ENCODE measurements at regions of chr7 and their contacts with region 1.

Region 1: DNA sequence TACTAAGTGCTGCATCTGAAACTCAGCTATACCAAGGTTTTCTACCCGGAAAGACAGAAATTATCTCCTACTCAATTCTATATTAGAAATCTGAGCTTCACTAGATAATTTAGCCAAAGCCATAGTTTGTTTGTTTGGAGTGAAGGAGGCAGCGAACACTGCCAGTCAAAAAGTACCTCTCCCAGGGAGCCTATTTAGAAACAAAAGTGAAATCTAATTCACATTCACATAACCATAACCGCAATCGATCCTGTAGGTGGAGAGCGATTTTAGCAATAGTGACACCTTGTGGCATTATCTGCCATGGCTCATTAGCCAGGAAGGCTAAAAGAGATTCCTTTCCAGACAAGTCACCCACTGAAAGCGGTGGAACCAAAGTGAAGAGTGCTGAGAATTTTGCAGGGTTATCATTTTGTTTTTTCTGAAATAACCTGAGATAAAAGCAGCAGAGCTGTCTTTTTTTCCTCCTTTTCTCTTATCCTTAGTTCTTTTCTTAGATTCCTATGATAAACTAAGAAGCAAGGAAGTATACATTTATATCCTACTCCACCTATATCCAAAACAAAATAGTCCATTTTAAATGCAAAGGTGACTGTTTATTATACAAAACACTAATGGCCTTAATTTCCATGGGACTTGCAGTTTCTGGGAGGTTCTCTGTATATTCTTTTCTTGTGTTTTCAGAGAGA is 83.7 kb upstream of the BET1 start:
- ATAC-seq: peak; percentile 48 to 97 (median 78)
- H3K4me3 ChIP-seq: no peak overlapping the region
- H3K27ac ChIP-seq: no peak overlapping the region
- H3K4me1 ChIP-seq: no peaks in the 10 kb centered on the region

Region 2: DNA sequence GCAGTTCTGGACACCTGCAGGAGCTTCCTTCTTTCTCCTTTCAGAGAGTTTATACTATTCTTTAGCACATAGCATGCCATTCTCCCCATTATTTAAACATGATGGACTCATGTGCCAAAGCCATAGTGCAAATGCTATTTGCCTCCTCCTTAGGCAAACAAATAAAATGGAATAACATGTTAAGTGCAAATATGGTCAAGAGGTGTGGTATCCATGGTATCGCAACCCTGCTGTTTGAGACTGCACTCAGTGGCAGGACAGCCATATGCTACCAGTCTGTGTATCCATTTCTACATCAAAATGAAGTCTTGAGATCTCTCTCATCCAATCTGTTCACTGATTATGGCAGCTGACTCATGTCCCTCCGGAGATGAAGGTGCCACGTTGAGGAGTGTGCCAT is 884.3 kb before region 1 on chr7:
- in situ Hi-C with region 1: no loop called
- ATAC-seq: peak in 4 of 8 experiments; percentile 45 to 97 (median 48)
- H3K4me3 ChIP-seq: no peak overlapping the region
- H3K27ac ChIP-seq: no peak overlapping the region
- H3K4me1 ChIP-seq: peaks cover 0 to 3% of the 10 kb centered on the region in 2 donors

Region 3: DNA sequence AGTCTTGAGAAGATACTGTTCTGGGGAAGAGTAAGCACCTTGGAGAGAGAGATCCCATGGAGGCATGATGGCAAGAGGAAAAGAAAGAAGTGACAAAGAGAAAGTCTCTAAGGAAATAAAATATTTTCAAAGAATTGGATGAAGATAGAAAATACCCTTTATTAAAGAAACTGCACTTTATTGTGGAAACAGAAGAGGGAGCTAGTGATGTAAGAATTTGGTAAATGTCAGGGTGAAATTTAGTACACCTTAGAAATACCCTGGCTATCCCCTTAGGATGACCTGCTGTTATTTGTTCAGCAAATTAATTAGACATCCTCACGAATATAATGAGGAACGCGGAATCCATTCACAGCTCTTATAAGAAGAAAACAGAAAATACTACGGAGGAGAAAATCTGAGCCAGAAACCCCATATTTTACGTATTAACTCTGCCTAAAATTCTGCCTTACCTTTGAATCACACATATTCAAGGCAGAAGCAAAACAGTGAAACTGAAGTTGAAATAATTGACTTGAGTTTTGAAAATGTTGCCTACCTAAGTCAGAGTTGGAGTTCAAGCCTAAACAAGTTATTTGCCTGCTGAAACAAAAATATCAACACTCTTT is 288.0 kb before region 1 on chr7:
- in situ Hi-C with region 1: loop called in 1 of 9 experiments (anchors 25 kb)
- ATAC-seq: peak in 3 of 8 experiments; percentile 29 to 51 (median 49)
- H3K4me3 ChIP-seq: no peak overlapping the region
- H3K27ac ChIP-seq: no peak overlapping the region
- H3K4me1 ChIP-seq: no peaks in the 10 kb centered on the region

Measured in motor neuron (in vitro differentiated cells).